SK-N-SH (cell line): ENCODE measurements at regions of chr16 and their contacts with region 1.

Region 1: GRCh38 chr16:55465077-55465896 is 13.7 kb upstream of the MMP2 start:
- DNase-seq: peak; percentile 81
- H3K4me3 ChIP-seq: peak overlapping the region in 1 of 2 experiments; percentile 56; a peak in 1 of 4 replicates
- H3K27ac ChIP-seq: no peak overlapping the region
- H3K4me1 ChIP-seq: peaks cover 0 to 2% of the 10 kb centered on the region in 2 experiments; a peak in 2 of 4 replicates
- H3K27me3 ChIP-seq: no peaks in the 10 kb centered on the region
- CTCF ChIP-seq: peak; percentile 100
- EP300 ChIP-seq: no peak
- RAD21 ChIP-seq: peak; percentile 100

Region 2: DNA sequence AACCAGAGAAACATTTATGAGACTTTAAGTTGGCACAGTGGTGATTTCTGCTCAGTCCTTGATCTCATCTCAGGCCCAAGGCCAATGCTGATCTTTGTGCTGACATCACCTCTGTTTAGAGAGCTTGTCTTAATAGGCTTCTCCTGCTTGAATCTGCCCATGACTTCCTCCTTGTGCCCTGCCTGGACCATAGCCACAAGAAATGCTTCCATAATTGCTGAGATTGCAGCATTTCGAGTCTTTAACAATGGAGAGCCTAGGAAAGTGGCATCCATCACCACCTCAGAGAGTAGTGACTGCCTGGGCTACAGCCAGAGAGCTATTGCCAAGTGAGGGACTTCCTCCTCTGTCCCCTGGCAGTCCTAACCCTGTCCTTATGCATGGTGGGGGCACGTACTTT is 11.4 kb before region 1 on chr16:
- CTCF ChIA-PET with region 1: interaction called, 32 read pairs
- POLR2A ChIA-PET with region 1: no interaction called
- DNase-seq: no peak
- H3K4me3 ChIP-seq: no peak overlapping the region
- H3K27ac ChIP-seq: no peak overlapping the region
- H3K4me1 ChIP-seq: no peaks in the 10 kb centered on the region
- H3K27me3 ChIP-seq: no peaks in the 10 kb centered on the region
- CTCF ChIP-seq: no peak
- EP300 ChIP-seq: no peak
- RAD21 ChIP-seq: no peak

Region 3: GRCh38 chr16:55502801-55503366 is 37.6 kb after region 1 on chr16:
- CTCF ChIA-PET with region 1: interaction called, 47 read pairs
- POLR2A ChIA-PET with region 1: no interaction called
- DNase-seq: peak; percentile 78
- H3K4me3 ChIP-seq: no peak overlapping the region
- H3K27ac ChIP-seq: peak overlapping the region; percentile 85 to 94
- H3K4me1 ChIP-seq: peaks cover 48 to 59% of the 10 kb centered on the region in 2 experiments
- H3K27me3 ChIP-seq: no peaks in the 10 kb centered on the region
- CTCF ChIP-seq: peak; percentile 7; the same call in 1 of the 2 replicates
- EP300 ChIP-seq: peak; percentile 85 to 89
- RAD21 ChIP-seq: peak; percentile 20; the same call in 1 of the 2 replicates

Region 4: GRCh38 chr16:55552621-55553020 is 87.3 kb after region 1 on chr16:
- CTCF ChIA-PET with region 1: interaction called, 130 read pairs
- POLR2A ChIA-PET with region 1: no interaction called
- DNase-seq: no peak
- H3K4me3 ChIP-seq: no peak overlapping the region
- H3K27ac ChIP-seq: peak overlapping the region in 1 of 2 experiments; percentile 41; a peak in 2 of 4 replicates
- H3K4me1 ChIP-seq: no peaks in the 10 kb centered on the region; a peak in 1 of 4 replicates
- H3K27me3 ChIP-seq: no peaks in the 10 kb centered on the region
- CTCF ChIP-seq: no peak
- EP300 ChIP-seq: peak in 1 of 2 experiments; percentile 31; a peak in 1 of 4 replicates
- RAD21 ChIP-seq: no peak

Region 5: DNA sequence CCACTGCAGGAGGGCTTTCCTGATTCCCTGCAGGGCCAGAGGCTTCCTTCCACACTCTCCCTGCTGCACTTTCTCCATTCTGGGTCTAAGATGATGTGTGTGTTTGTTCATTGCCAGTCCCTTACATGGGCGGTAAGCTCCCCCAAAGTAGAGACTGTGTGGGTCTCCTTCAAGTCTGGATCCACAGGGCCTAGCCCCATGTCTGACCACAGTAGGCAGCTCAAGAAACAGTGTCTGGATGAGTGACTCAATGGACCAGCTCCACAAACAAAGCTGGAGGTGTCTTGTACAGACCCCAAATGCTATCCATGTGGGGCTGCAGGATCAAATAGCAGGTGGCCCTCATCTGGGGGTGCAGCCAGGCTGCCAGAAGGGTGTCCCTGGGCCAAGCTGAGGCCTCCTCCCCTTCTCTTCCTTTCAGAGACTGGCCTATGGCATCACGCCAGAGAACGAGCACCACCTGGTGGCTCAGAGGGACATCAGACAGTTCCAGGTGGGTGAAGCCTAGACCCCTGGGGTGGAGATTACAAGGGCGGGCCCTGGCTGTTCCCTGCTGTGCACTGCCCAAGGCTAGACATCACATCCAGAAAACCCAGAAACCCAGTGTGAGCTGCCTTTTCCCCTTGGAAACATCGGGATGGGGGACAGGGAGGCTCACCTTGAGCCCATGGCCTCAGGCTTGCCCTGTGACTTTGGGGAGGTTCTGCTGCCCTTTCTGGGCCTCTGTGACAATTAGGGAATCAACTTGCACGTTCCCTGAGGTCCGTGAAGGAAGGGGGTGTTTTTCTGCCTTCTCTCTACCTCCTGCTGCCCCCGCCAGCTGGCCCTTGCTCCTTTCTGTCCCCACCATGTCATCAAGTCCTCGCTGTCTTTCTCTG is 236.4 kb after region 1 on chr16:
- CTCF ChIA-PET with region 1: interaction called, 92 read pairs
- POLR2A ChIA-PET with region 1: interaction called, 5 read pairs
- DNase-seq: peak; percentile 65
- H3K4me3 ChIP-seq: no peak overlapping the region
- H3K27ac ChIP-seq: peak overlapping the region in 1 of 2 experiments; percentile 76; a peak in 2 of 4 replicates
- H3K4me1 ChIP-seq: peaks cover 0 to 57% of the 10 kb centered on the region in 2 experiments; a peak in 2 of 4 replicates
- H3K27me3 ChIP-seq: no peaks in the 10 kb centered on the region; the same call in 1 of the 2 replicates
- CTCF ChIP-seq: peak; percentile 65
- EP300 ChIP-seq: no peak
- RAD21 ChIP-seq: peak; percentile 63

Region 6: GRCh38 chr16:55853114-55853513 is 387.8 kb after region 1 on chr16:
- CTCF ChIA-PET with region 1: interaction called, 18 read pairs
- POLR2A ChIA-PET with region 1: no interaction called
- DNase-seq: no peak
- H3K4me3 ChIP-seq: no peak overlapping the region
- H3K27ac ChIP-seq: no peak overlapping the region
- H3K4me1 ChIP-seq: no peaks in the 10 kb centered on the region; a peak in 1 of 4 replicates
- H3K27me3 ChIP-seq: no peaks in the 10 kb centered on the region
- CTCF ChIP-seq: no peak
- EP300 ChIP-seq: no peak
- RAD21 ChIP-seq: no peak